H1 (cell line): ENCODE measurements at regions of chr17 and their contacts with region 1.

Region 1: GRCh38 chr17:1967213-1967612 is 57.9 kb downstream of the RTN4RL1 start:
- DNase-seq: peak in 1 of 2 experiments; percentile 71
- H3K4me3 ChIP-seq: no peak overlapping the region
- H3K27ac ChIP-seq: no peak overlapping the region
- H3K4me1 ChIP-seq: peaks cover 0 to 11% (median 4%) of the 10 kb centered on the region in 4 experiments; a peak in 4 of 7 replicates
- H3K27me3 ChIP-seq: peaks cover 0 to 3% (median 1%) of the 10 kb centered on the region in 4 experiments; a peak in 2 of 7 replicates
- CTCF ChIP-seq: peak in 1 of 3 experiments; percentile 15; a peak in 1 of 4 replicates
- EP300 ChIP-seq: no peak
- POLR2A ChIP-seq: no peak
- RAD21 ChIP-seq: no peak

Region 2: GRCh38 chr17:1951920-1952319 is 15.3 kb before region 1 on chr17:
- CTCF ChIA-PET with region 1: interaction called, 11 read pairs
- POLR2A ChIA-PET with region 1: no interaction called
- DNase-seq: no peak
- H3K4me3 ChIP-seq: no peak overlapping the region
- H3K27ac ChIP-seq: no peak overlapping the region
- H3K4me1 ChIP-seq: 0 out of 7 replicates have a peak, but pooled peaks cover 0 to 2% (median 0%) of the 10 kb centered on the region in 4 experiments
- H3K27me3 ChIP-seq: no peaks in the 10 kb centered on the region
- CTCF ChIP-seq: no peak
- EP300 ChIP-seq: no peak
- POLR2A ChIP-seq: no peak
- RAD21 ChIP-seq: no peak

Region 3: DNA sequence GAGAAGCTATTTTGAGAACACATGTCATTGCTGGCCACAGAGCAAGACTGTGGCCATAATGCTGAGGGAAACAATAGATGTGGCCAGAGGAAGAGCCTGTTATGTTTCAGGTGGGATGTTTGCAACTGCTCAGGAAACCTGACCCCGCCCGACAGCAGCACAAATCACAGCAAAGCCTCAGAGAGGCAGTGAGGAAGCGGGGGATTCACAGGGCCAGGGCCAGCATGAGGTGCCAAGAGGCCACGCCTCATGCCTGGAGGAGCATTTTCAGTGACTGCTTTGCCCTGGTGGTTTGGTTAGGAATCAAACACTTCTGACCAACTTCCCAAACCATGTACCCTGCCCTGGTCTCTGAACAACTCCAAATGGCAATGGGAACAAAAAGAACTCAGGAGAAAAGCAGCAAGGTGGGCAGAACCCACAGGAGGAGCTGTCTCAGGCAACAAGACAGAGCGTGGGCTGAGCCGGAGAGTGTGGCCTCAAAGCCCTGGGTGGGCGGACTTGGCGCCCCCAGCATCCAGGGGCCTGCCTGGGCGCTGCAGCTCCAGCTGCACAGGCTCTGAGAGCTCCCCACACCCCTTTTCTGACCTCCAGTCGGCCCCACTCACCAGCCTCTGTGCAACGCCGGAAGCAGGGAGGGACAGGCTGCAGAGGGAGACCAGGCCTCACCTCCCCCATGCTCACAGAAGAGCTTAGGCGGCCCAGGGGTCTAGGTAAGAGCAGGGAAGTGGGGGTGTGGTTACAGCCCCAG is 108.3 kb after region 1 on chr17:
- CTCF ChIA-PET with region 1: no interaction called
- POLR2A ChIA-PET with region 1: no interaction called
- DNase-seq: no peak
- H3K4me3 ChIP-seq: no peak overlapping the region
- H3K27ac ChIP-seq: no peak overlapping the region; the same call in 1 of the 2 replicates
- H3K4me1 ChIP-seq: peaks cover 2 to 12% (median 5%) of the 10 kb centered on the region in 4 experiments; a peak in 6 of 7 replicates
- H3K27me3 ChIP-seq: no peaks in the 10 kb centered on the region
- CTCF ChIP-seq: peak in 2 of 3 experiments; percentile 5 to 8; a peak in 1 of 4 replicates
- EP300 ChIP-seq: no peak
- POLR2A ChIP-seq: no peak
- RAD21 ChIP-seq: peak in 1 of 2 experiments; percentile 1; a peak in 1 of 4 replicates